Naive thymus-derived CD4-positive, alpha-beta T cell (primary cell): ENCODE measurements at regions of chr12 and their contacts with region 1.

Region 1: GRCh38 chr12:31325877-31326631 is at the start of gene SINHCAF:
- DNase-seq: peak; percentile 97 to 99 (median 98)
- ATAC-seq: peak; percentile 78
- H3K4me3 ChIP-seq: peak within 1 kb of the TSS; percentile 82
- H3K4me3 Mint-ChIP-seq: peak within 1 kb of the TSS; percentile 89 to 99 (median 96)
- H3K27ac ChIP-seq: peak within 1 kb of the TSS; percentile 93
- H3K27ac Mint-ChIP-seq: peak within 1 kb of the TSS; percentile 81 to 99 (median 93)
- H3K4me1 ChIP-seq: peaks cover 5 to 22% of the 10 kb centered on the region in 2 donors
- H3K4me1 Mint-ChIP-seq: peaks cover 20 to 37% (median 26%) of the 10 kb centered on the region in 7 donors
- H3K27me3 ChIP-seq: no peaks in the 10 kb centered on the region
- H3K27me3 Mint-ChIP-seq: peaks cover 0 to 17% (median 0%) of the 10 kb centered on the region in 5 donors
- total RNA-seq, gene SINHCAF: 80.5 to 114 (median 90.8) TPM

Region 2: GRCh38 chr12:30754709-30755394 is 571.2 kb before region 1 on chr12 and contains the start of gene CAPRIN2:
- CTCF ChIA-PET with region 1: no interaction called
- POLR2A ChIA-PET with region 1: no interaction called
- intact Hi-C with region 1: loop called (anchors 1 kb)
- DNase-seq: peak; percentile 89 to 97 (median 92)
- ATAC-seq: peak; percentile 96
- H3K4me3 ChIP-seq: peak within 1 kb of the TSS; percentile 67
- H3K4me3 Mint-ChIP-seq: peak within 1 kb of the TSS; percentile 93 to 99 (median 96)
- H3K27ac ChIP-seq: peak within 1 kb of the TSS; percentile 63
- H3K27ac Mint-ChIP-seq: peak within 1 kb of the TSS; percentile 80 to 93 (median 90)
- H3K4me1 ChIP-seq: peaks cover 13 to 29% of the 10 kb centered on the region in 2 donors
- H3K4me1 Mint-ChIP-seq: peaks cover 22 to 53% (median 46%) of the 10 kb centered on the region in 7 donors
- H3K27me3 ChIP-seq: no peaks in the 10 kb centered on the region
- H3K27me3 Mint-ChIP-seq: no peaks in the 10 kb centered on the region
- total RNA-seq, gene CAPRIN2: 13.7 to 50.1 (median 28.9) TPM

Region 3: GRCh38 chr12:31362759-31363415 is 36.8 kb after region 1 on chr12:
- CTCF ChIA-PET with region 1: interaction called, 3 read pairs
- POLR2A ChIA-PET with region 1: interaction called, 4 read pairs
- intact Hi-C with region 1: loop called (anchors 1 kb)
- DNase-seq: peak in 5 of 9 donors; percentile 4 to 34 (median 17)
- ATAC-seq: peak; percentile 78
- H3K4me3 ChIP-seq: peak overlapping the region; percentile 8
- H3K4me3 Mint-ChIP-seq: peak overlapping the region; percentile 50 to 81 (median 74)
- H3K27ac ChIP-seq: no peak overlapping the region
- H3K27ac Mint-ChIP-seq: peak overlapping the region; percentile 12 to 91 (median 56)
- H3K4me1 ChIP-seq: peaks cover 4 to 11% of the 10 kb centered on the region in 2 donors
- H3K4me1 Mint-ChIP-seq: peaks cover 12 to 27% (median 18%) of the 10 kb centered on the region in 7 donors
- H3K27me3 ChIP-seq: no peaks in the 10 kb centered on the region
- H3K27me3 Mint-ChIP-seq: no peaks in the 10 kb centered on the region

Region 4: DNA sequence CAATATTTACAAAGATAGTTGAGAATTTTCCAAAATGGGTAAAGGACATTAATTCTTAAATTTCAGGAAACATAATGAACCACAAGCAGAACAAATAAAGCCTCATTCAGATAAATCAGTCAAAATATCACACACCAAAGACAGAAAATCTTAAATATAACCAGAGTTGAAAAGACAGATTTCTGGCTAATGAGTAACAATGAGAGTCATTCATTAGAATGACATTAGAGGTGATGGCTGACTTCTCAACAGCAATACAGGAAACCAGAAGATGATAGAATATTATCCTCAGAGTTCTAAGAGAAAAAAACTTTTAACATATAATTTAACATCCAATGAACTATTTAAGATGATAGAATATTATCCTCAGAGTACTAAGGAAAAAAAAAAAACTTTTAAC is 140.7 kb after region 1 on chr12:
- CTCF ChIA-PET with region 1: no interaction called
- POLR2A ChIA-PET with region 1: no interaction called
- intact Hi-C with region 1: no loop called
- DNase-seq: no peak
- ATAC-seq: no peak
- H3K4me3 ChIP-seq: no peak overlapping the region
- H3K4me3 Mint-ChIP-seq: no peak overlapping the region
- H3K27ac ChIP-seq: no peak overlapping the region
- H3K27ac Mint-ChIP-seq: no peak overlapping the region
- H3K4me1 ChIP-seq: no peaks in the 10 kb centered on the region
- H3K4me1 Mint-ChIP-seq: no peaks in the 10 kb centered on the region
- H3K27me3 ChIP-seq: no peaks in the 10 kb centered on the region
- H3K27me3 Mint-ChIP-seq: peaks cover 0 to 3% (median 0%) of the 10 kb centered on the region in 5 donors

Region 5: GRCh38 chr12:31536672-31537071 is 210.6 kb after region 1 on chr12:
- CTCF ChIA-PET with region 1: no interaction called
- POLR2A ChIA-PET with region 1: no interaction called
- intact Hi-C with region 1: no loop called
- DNase-seq: no peak
- ATAC-seq: no peak
- H3K4me3 ChIP-seq: no peak overlapping the region
- H3K4me3 Mint-ChIP-seq: no peak overlapping the region
- H3K27ac ChIP-seq: no peak overlapping the region
- H3K27ac Mint-ChIP-seq: no peak overlapping the region
- H3K4me1 ChIP-seq: no peaks in the 10 kb centered on the region
- H3K4me1 Mint-ChIP-seq: no peaks in the 10 kb centered on the region
- H3K27me3 ChIP-seq: no peaks in the 10 kb centered on the region
- H3K27me3 Mint-ChIP-seq: peaks cover 12 to 40% (median 29%) of the 10 kb centered on the region in 5 donors

Region 6: DNA sequence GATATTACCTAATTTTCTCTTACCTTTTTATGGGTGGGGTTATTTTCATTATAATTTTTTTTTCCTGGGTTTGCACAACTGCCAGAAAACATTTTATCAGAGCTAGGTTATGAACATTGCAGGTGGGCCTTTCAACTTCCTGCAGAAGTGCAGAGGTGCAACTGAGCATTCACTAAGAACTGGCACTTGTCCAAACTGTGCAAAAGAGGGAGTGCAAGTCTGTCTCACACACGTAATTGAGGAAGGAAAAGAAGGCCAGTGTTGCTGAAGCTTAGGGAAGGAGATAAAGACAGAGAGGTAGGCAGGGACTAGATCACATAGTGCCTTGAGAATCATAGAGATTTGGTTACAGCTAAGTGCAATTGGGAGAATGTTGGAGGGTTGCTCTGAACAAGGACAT is 416.8 kb after region 1 on chr12:
- CTCF ChIA-PET with region 1: no interaction called
- POLR2A ChIA-PET with region 1: no interaction called
- intact Hi-C with region 1: loop called (anchors 5 kb)
- DNase-seq: peak in 6 of 9 donors; percentile 15 to 54 (median 42)
- ATAC-seq: peak; percentile 44
- H3K4me3 ChIP-seq: no peak overlapping the region
- H3K4me3 Mint-ChIP-seq: peak overlapping the region in 6 of 10 donors; percentile 1 to 69 (median 36)
- H3K27ac ChIP-seq: no peak overlapping the region
- H3K27ac Mint-ChIP-seq: peak overlapping the region in 8 of 9 donors; percentile 47 to 85 (median 64)
- H3K4me1 ChIP-seq: peaks cover 17 to 27% of the 10 kb centered on the region in 2 donors
- H3K4me1 Mint-ChIP-seq: peaks cover 36 to 87% (median 75%) of the 10 kb centered on the region in 7 donors
- H3K27me3 ChIP-seq: no peaks in the 10 kb centered on the region
- H3K27me3 Mint-ChIP-seq: no peaks in the 10 kb centered on the region

Region 7: DNA sequence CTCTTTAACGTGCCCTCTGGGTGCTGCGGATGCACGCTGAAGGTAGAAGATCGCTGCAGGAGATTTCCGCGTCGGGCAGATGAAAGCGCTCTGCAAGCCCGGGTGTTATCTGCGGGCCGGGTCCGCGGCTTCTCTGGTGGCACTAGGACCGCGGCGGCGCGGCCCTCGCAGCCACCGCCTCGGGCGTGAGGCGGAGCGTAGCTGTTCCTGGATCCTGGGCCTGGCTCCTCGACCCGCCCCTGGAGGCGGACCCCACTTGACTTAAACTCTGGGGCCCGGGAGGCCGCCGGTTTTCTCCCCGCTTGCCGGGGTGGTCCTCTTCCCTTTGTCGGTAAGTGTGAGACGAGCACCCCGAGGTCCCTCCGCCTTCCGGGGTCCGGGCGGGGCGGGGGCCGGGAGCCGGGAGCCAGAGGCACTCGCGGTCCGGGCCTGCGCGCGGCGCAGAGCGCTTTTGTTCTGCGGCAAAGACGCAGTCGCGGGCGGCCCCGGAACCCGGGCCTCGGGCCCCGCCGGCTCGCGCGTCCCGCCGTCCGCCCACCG is 633.2 kb after region 1 on chr12 and contains the start of gene RESF1:
- CTCF ChIA-PET with region 1: no interaction called
- POLR2A ChIA-PET with region 1: no interaction called
- intact Hi-C with region 1: loop called (anchors 2 to 5 kb)
- DNase-seq: peak; percentile 67 to 89 (median 85)
- ATAC-seq: peak; percentile 88
- H3K4me3 ChIP-seq: peak within 1 kb of the TSS; percentile 91
- H3K4me3 Mint-ChIP-seq: peak within 1 kb of the TSS; percentile 91 to 97 (median 94)
- H3K27ac ChIP-seq: peak within 1 kb of the TSS; percentile 86
- H3K27ac Mint-ChIP-seq: peak within 1 kb of the TSS; percentile 91 to 98 (median 96)
- H3K4me1 ChIP-seq: peaks cover 23 to 49% of the 10 kb centered on the region in 2 donors
- H3K4me1 Mint-ChIP-seq: peaks cover 43 to 74% (median 57%) of the 10 kb centered on the region in 7 donors
- H3K27me3 ChIP-seq: no peaks in the 10 kb centered on the region
- H3K27me3 Mint-ChIP-seq: no peaks in the 10 kb centered on the region
- total RNA-seq, gene RESF1: 141 to 490 (median 161) TPM

Region 8: DNA sequence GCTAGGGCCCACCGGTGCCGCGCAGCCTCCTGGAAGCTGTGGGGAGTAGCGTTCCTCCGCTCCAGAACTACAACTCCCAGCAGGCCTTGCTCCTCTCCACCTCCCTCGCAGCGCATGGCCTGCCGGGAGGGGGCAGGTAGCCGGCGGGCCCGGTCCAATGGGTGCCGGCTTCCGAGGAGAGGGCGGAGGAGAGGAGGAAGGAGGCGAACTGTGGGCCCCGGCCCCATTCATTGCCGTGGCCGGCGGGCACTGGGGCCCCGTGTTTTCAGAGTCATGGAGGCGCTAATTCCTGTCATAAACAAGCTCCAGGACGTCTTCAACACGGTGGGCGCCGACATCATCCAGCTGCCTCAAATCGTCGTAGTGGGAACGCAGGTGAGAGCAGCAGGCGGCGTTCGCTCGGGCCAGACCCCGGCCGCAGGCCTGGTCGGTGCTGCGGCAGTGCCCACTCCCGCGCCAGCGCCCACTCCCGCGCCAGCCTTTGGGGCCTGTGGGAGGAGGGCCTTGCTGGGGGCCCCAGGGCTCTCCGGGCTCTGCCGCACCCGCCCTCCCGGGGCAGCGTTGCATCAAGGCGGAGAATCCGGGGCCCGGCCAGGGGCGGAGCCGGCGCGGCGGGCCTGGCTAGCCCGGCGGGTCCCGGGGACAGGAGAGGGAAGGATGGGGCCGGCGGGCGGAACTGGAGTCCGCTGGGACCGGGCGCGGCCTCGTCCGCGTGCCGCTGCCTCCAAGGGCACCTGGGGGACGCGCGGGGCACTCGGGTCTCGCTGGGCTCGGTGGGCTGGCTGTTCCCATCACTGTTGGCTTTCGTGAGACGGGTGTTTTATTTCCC is 1353.3 kb after region 1 on chr12 and contains the start of gene DNM1L:
- CTCF ChIA-PET with region 1: no interaction called
- POLR2A ChIA-PET with region 1: no interaction called
- intact Hi-C with region 1: loop called (anchors 1 to 2 kb)
- DNase-seq: peak; percentile 85 to 93 (median 92)
- ATAC-seq: peak; percentile 99
- H3K4me3 ChIP-seq: peak within 1 kb of the TSS; percentile 83
- H3K4me3 Mint-ChIP-seq: peak within 1 kb of the TSS; percentile 83 to 97 (median 93)
- H3K27ac ChIP-seq: peak within 1 kb of the TSS; percentile 82
- H3K27ac Mint-ChIP-seq: peak within 1 kb of the TSS; percentile 59 to 95 (median 89)
- H3K4me1 ChIP-seq: peaks cover 9 to 11% of the 10 kb centered on the region in 2 donors
- H3K4me1 Mint-ChIP-seq: peaks cover 16 to 39% (median 31%) of the 10 kb centered on the region in 7 donors
- H3K27me3 ChIP-seq: no peaks in the 10 kb centered on the region
- H3K27me3 Mint-ChIP-seq: no peaks in the 10 kb centered on the region
- total RNA-seq, gene DNM1L: 41.6 to 68.4 (median 58.9) TPM